Mammary epithelial cell (primary cell): ENCODE measurements at regions of chr19 and their contacts with region 1.

Region 1: GRCh38 chr19:16371540-16371986 is 46.9 kb downstream of the KLF2 start:
- DNase-seq: no peak
- H3K4me3 ChIP-seq: no peak overlapping the region
- H3K27ac ChIP-seq: no peak overlapping the region
- H3K4me1 ChIP-seq: no peaks in the 10 kb centered on the region
- H3K27me3 ChIP-seq: no peaks in the 10 kb centered on the region
- CTCF ChIP-seq: no peak

Region 2: DNA sequence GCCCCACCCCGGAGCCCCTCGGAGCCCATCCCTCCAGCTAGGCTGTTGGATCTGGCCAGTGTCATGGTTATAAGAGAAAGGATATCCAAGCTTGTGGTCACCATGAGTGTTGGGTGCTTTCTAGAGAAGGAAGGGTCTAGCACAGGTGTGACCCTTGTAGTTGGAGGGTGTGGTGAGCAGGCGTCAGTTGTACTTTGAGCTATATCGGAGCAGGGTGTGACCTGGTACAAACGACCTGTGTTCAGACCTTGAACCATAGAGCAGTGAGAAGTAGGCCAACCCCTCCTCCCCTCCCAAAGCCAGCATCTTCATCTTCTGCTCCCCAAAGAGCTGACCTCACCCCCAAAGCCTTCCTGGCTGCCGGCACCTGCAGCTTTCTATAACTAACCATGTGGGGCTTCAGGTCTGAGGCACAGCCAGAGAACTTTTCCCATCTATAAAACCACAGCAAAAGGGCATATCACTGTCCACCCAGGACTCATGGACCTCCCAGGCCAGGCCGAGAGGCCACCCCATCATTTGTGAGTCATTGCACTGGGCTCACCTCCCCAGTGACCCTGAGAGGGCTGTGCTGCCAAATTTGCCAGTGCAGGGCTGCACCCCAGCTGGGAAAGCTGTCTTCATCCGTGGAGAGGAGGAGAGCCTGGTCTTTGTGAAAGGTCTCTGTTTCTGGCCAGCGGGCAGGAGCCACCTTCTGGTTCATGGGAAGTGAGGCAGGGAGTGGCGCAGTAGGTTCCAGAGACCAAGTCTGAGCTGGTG is 245.6 kb before region 1 on chr19:
- CTCF ChIA-PET with region 1: no interaction called
- dilution Hi-C with region 1: loop called (anchors 5 kb)
- in situ Hi-C with region 1: no loop called
- intact Hi-C with region 1: no loop called
- DNase-seq: no peak
- H3K4me3 ChIP-seq: no peak overlapping the region
- H3K27ac ChIP-seq: no peak overlapping the region
- H3K4me1 ChIP-seq: no peaks in the 10 kb centered on the region
- H3K27me3 ChIP-seq: no peaks in the 10 kb centered on the region
- CTCF ChIP-seq: no peak

Region 3: DNA sequence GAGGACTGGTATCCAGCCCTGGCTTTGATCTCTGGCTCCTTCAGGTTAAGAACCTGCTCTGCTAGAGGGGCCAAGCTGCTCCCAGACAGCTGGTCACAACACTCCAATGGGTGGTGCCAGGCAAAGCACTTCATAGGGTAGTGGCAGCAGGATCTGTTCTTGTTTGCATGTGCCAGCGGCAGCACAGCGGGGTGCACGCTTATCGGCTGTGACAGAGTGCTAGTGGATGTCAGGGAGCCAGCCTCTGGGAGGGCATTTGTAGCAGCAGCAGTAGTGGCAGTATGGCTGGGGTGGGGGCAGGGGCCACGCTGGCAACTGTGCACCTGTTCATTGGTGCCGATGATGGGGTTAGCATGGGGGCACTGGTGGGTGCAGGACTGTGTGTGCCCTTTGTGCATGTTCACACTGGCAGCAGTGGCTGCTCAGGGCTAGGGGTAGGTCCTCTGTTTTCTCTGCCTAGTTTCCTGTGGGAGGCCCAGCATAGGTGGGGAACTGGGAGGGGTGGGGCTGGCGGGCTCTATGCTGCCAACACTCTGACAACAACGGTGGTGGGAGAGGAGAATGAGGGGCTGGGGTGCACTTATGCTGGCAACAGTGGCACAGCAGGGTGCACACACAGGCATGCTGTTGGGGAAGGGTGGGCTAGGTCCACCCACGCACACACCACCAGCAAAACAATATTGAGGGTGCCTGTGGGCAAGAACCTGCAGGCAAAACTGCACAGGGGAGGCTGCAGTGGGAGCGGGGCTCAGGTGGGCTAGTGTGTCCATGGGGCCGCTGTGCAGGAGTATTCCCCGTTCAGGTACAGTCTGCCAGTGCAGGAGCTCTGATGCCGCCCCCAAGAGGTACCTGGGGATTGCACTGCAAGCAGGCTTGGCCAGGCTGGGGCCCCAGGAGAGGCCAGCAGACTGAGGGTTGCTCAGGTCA is 154.6 kb before region 1 on chr19:
- CTCF ChIA-PET with region 1: no interaction called
- dilution Hi-C with region 1: loop called (anchors 5 kb)
- in situ Hi-C with region 1: no loop called
- intact Hi-C with region 1: no loop called
- DNase-seq: no peak
- H3K4me3 ChIP-seq: no peak overlapping the region
- H3K27ac ChIP-seq: no peak overlapping the region
- H3K4me1 ChIP-seq: no peaks in the 10 kb centered on the region
- H3K27me3 ChIP-seq: no peaks in the 10 kb centered on the region
- CTCF ChIP-seq: no peak

Region 4: DNA sequence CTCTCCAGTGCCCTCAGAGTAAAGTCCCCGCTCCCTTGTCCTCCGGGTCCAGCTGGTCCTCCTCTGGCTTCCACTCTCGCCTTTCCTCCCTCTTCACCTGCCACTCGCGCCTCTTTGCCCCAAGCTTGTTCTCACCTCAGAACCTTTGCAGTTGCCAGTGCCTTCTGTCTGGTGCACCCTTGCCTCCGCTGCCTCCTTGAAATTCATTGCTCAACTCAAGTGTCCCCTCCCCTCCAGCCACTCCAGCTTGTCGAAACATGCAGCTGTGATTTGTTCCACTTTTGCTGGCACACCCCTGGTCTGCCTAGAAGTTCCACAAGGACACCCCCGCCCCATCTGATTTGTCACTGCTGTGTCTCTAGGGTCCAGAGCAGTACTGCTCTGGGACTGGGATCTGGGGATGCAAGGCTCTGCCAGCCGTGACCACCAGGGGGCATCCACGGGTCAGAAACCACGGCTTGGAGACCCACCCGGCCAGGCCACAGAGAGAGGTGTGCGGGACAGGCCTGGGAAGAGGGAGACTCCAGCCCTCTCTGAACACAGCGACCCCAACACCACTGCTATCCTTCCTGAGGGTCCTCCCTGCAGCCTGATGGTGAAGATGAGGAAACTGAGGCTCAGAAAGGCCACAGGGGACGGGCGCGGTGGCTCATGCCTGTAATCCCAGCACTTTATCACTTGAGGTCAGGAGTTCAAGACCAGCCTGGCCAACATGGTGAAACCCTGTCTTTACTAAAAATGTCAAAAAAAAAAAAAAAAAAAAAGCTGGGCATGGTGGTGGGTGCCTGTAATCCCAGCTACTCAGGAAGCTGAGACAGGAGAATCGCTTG is 124.0 kb before region 1 on chr19:
- CTCF ChIA-PET with region 1: no interaction called
- dilution Hi-C with region 1: loop called (anchors 5 kb)
- in situ Hi-C with region 1: no loop called
- intact Hi-C with region 1: no loop called
- DNase-seq: peak; percentile 48
- H3K4me3 ChIP-seq: no peak overlapping the region
- H3K27ac ChIP-seq: no peak overlapping the region
- H3K4me1 ChIP-seq: no peaks in the 10 kb centered on the region
- H3K27me3 ChIP-seq: no peaks in the 10 kb centered on the region
- CTCF ChIP-seq: peak; percentile 80 to 93

Region 5: GRCh38 chr19:16324384-16325160 is 47.0 kb before region 1 on chr19 and contains the start of gene KLF2:
- CTCF ChIA-PET with region 1: no interaction called
- dilution Hi-C with region 1: loop called (anchors 5 kb)
- in situ Hi-C with region 1: no loop called
- intact Hi-C with region 1: no loop called
- DNase-seq: peak; percentile 84
- H3K4me3 ChIP-seq: peak within 1 kb of the TSS; percentile 53 to 65 (median 58)
- H3K27ac ChIP-seq: peak within 1 kb of the TSS; percentile 63
- H3K4me1 ChIP-seq: peaks cover 2% of the 10 kb centered on the region
- H3K27me3 ChIP-seq: no peaks in the 10 kb centered on the region
- CTCF ChIP-seq: no peak
- total RNA-seq, gene KLF2: 0.99 TPM in 1 of 2 donors, not detected in the other